ENCODE measurements at regions of chr11 and their contacts with region 1.

Region 1: GRCh38 chr11:2377511-2378443 is 667 bp downstream of the CD81 start:
- DNase-seq: peak; percentile 84
- ATAC-seq: peak; percentile 17

Region 2: DNA sequence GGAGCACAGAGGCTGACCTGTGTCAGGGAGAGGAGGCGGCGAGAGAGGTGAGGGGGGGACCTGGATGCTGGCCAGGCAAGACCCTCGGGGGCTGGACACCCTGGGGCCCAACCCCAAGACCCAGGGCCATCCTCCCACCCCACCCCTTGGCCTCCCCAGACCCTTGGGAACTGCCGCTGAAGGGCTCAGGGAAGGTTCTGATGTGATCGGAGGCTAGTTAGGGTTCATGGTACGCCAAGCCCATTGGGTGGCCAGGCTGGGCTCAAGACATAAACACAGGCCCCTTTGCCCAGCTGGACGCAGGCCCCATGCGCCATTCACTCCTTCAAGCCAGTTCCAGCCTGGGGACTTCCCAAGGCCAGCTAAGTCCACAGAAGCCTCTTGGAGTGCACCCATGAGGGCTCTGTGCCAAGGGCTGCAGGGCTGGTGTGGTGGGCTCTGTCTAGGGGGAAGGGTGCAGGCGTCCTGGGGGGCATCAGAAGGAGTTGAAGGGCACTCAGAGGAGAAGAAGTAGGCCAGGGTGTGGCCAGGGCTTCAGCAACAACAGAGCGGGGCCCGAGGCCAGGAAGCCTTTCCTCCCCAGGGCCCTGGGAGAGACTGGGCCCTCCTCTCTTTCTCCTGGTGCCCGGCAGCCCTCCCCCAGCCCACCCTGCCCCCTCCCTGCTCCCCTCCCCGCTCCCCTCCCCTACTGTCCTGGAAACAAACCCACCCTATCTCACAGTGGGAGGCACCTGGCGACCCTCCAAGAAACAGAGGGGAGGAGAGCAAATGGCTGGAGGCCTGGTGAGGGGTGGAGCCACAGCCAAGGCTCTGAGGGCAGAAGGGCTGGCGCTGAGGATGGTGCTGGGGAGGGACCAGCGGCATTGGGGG is 63.0 kb before region 1 on chr11:
- intact Hi-C with region 1: loop called (anchors 1 kb)
- DNase-seq: peak; percentile 94
- ATAC-seq: peak; percentile 88

Region 3: GRCh38 chr11:2342981-2343380 is 34.8 kb before region 1 on chr11:
- intact Hi-C with region 1: no loop called
- DNase-seq: no peak
- ATAC-seq: peak; percentile 52

Region 4: GRCh38 chr11:2400069-2400760 is 22.4 kb after region 1 on chr11 and contains the start of gene TSSC4:
- intact Hi-C with region 1: loop called (anchors 2 kb)
- DNase-seq: peak; percentile 100
- ATAC-seq: peak; percentile 94
- total RNA-seq, gene TSSC4: 31.4 TPM

Region 5: DNA sequence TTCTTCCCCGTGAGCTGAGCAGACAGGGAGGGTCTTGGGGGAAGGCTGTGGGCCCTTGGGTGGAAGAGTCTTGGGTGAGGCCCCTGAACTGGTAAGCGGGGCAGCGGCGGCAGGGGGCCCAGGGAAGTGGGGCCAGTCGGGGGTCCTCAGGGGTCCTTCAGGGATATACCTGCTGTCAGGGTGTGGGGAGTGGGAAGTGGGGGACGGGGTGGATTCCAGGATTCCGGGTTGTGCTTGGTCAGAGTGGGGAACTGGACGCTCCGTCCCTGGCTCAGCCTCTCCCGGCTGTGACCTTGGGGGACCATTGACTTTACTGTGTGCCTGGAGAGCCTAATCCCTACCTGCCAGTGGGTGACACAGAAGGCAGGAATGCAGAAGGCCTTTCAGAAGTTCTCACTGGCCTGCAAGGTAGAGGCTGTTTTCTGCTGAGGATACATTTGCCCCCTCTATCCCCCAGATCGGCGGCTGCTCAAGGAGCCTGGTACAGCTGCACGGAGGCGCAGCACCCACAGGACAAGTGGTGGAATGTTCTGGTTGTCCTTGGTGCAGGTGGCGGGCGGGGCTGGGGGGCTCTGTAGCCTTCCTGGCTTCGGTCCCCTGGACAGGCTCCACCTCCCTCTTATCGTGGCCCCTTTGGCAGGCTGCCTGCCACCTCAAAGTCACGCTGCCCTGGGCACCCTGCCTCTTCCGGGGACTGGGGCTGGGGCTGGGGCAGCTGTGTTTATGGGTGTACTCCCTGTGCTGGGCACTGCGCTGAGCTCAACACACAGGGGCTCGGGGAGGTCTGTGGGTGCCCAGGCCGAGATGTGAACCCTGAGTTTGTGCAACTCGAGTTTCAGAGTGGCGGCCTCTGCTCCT is 85.4 kb after region 1 on chr11:
- intact Hi-C with region 1: loop called (anchors 5 kb)
- DNase-seq: peak; percentile 88
- ATAC-seq: peak; percentile 82